Naive thymus-derived CD4-positive, alpha-beta T cell (primary cell): ENCODE measurements at regions of chr3 and their contacts with region 1.

Region 1: DNA sequence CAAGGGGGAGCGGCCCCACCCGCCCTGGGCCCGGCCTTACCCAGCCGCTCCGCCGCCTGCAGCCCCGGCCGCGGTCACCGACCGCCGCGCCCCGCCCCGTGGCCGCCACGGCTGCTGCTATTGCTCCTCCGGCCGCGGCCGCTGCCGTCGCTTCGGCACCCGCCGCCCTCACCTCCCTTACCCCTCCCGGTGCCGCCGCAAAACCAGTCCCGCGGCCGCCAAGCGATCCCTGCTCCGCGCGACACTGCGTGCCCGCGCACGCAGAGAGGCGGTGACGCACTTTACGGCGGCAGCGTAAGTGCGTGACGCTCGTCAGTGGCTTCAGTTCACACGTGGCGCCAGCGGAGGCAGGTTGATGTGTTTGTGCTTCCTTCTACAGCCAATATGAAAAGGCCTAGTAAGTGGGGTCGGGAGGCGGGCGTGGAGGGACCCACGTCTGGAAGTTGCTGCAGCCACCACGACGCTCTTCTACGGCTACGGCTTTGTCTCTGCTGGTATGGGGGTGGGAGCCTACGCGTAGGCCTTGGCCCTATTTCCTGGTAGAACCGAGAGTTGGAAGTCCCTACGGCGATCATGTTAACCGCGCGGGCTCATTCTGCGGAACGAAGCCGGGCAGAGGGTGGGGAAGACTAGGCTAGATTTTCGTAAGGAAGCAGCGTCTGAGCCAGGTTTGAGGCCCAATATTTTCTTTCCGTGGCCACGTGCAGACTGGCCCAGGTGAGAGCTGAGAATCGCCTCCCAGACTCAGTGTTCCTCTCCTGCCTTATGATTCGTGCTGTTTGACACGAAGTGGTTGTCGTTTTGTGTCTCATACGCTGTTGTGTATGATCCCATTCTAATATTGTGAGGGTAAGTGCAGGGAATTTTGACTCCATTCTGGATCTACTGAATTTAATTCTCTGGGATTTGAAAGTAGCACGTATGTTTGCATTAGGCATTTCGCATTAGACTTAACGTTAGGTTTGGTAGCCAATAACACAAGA is at the starts of genes GNL3 and PBRM1:
- DNase-seq: peak; percentile 87 to 94 (median 92)
- ATAC-seq: peak; percentile 96
- H3K4me3 ChIP-seq: peak within 1 kb of the TSS; percentile 80
- H3K4me3 Mint-ChIP-seq: peak within 1 kb of the TSS; percentile 95 to 99 (median 98)
- H3K27ac ChIP-seq: peak within 1 kb of the TSS; percentile 89
- H3K27ac Mint-ChIP-seq: peak within 1 kb of the TSS; percentile 93 to 99 (median 98)
- H3K4me1 ChIP-seq: peaks cover 21 to 25% of the 10 kb centered on the region in 2 donors
- H3K4me1 Mint-ChIP-seq: peaks cover 23 to 72% (median 62%) of the 10 kb centered on the region in 7 donors
- H3K27me3 ChIP-seq: no peaks in the 10 kb centered on the region
- H3K27me3 Mint-ChIP-seq: no peaks in the 10 kb centered on the region
- total RNA-seq, gene GNL3: 87.9 to 116 (median 97.2) TPM
- total RNA-seq, gene PBRM1: 58.4 to 83.8 (median 74.2) TPM

Region 2: GRCh38 chr3:52455283-52456168 is 230.5 kb before region 1 on chr3 and contains the start of gene NISCH:
- CTCF ChIA-PET with region 1: no interaction called
- POLR2A ChIA-PET with region 1: no interaction called
- intact Hi-C with region 1: loop called (anchors 5 to 10 kb)
- DNase-seq: peak; percentile 92 to 99 (median 97)
- ATAC-seq: peak; percentile 98
- H3K4me3 ChIP-seq: peak within 1 kb of the TSS; percentile 98
- H3K4me3 Mint-ChIP-seq: peak within 1 kb of the TSS; percentile 87 to 96 (median 93)
- H3K27ac ChIP-seq: peak within 1 kb of the TSS; percentile 88
- H3K27ac Mint-ChIP-seq: peak within 1 kb of the TSS; percentile 96 to 100 (median 99)
- H3K4me1 ChIP-seq: peaks cover 15 to 23% of the 10 kb centered on the region in 2 donors
- H3K4me1 Mint-ChIP-seq: peaks cover 25 to 47% (median 41%) of the 10 kb centered on the region in 7 donors
- H3K27me3 ChIP-seq: no peaks in the 10 kb centered on the region
- H3K27me3 Mint-ChIP-seq: no peaks in the 10 kb centered on the region
- total RNA-seq, gene NISCH: 86.8 to 210 (median 162) TPM

Region 3: GRCh38 chr3:52670621-52671521 is 15.1 kb before region 1 on chr3:
- CTCF ChIA-PET with region 1: no interaction called
- POLR2A ChIA-PET with region 1: interaction called, 3 read pairs
- intact Hi-C with region 1: loop called in 1 of 2 experiments (anchors 2 kb)
- DNase-seq: peak in 1 of 9 donors; percentile 56
- ATAC-seq: peak; percentile 89
- H3K4me3 ChIP-seq: no peak overlapping the region
- H3K4me3 Mint-ChIP-seq: peak overlapping the region in 1 of 10 donors; percentile 62
- H3K27ac ChIP-seq: no peak overlapping the region
- H3K27ac Mint-ChIP-seq: peak overlapping the region in 6 of 9 donors; percentile 25 to 85 (median 45)
- H3K4me1 ChIP-seq: peaks cover 0 to 14% of the 10 kb centered on the region in 2 donors
- H3K4me1 Mint-ChIP-seq: peaks cover 14 to 31% (median 24%) of the 10 kb centered on the region in 7 donors
- H3K27me3 ChIP-seq: no peaks in the 10 kb centered on the region
- H3K27me3 Mint-ChIP-seq: no peaks in the 10 kb centered on the region

Region 4: DNA sequence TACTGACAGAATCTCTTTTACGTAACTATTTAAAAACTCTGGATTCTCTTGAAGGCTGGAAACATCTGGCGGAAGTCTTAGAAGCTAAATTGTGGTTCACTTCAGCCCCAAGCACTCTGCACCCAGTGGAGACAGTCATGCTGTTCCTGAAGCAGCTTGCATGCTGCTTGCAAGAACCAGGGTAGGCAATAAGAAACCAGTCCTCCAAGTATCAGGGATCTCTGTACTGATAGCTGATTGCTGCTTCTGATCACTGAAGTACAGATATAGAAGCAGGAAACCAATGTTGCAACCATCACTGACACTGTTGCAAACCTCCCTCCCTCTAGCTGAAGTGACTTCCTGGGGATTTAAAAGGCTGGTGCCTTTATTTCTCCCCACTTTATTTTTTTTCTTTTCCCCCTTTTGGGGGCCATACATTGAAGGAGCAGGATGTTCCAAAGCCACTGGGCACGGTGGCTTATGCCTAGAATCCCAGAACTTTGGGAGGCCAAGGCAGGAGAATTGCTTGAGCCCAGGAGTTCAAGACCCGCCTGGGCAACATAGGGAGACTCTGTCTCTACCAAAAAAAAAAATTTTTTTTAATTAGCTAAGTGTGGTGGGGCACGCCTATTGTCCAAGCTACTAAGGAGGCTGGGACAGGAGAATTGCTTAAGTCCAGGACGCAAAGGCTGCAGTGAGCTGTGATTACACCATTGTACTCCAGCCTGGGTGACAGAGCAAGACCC is 35.2 kb after region 1 on chr3:
- CTCF ChIA-PET with region 1: no interaction called
- POLR2A ChIA-PET with region 1: interaction called, 4 read pairs
- intact Hi-C with region 1: loop called in 1 of 2 experiments (anchors 5 kb)
- DNase-seq: peak in 7 of 9 donors; percentile 47 to 69 (median 55)
- ATAC-seq: peak; percentile 86
- H3K4me3 ChIP-seq: no peak overlapping the region
- H3K4me3 Mint-ChIP-seq: peak overlapping the region; percentile 51 to 81 (median 69)
- H3K27ac ChIP-seq: peak overlapping the region; percentile 69
- H3K27ac Mint-ChIP-seq: peak overlapping the region; percentile 77 to 95 (median 92)
- H3K4me1 ChIP-seq: peaks cover 0 to 28% of the 10 kb centered on the region in 2 donors
- H3K4me1 Mint-ChIP-seq: peaks cover 18 to 47% (median 33%) of the 10 kb centered on the region in 7 donors
- H3K27me3 ChIP-seq: no peaks in the 10 kb centered on the region
- H3K27me3 Mint-ChIP-seq: no peaks in the 10 kb centered on the region

Region 5: GRCh38 chr3:52897130-52898122 is 211.4 kb after region 1 on chr3 and contains the start of gene STIMATE:
- CTCF ChIA-PET with region 1: no interaction called
- POLR2A ChIA-PET with region 1: no interaction called
- intact Hi-C with region 1: loop called in 1 of 2 experiments (anchors 5 kb)
- DNase-seq: peak; percentile 77 to 89 (median 86)
- ATAC-seq: peak; percentile 97
- H3K4me3 ChIP-seq: peak within 1 kb of the TSS; percentile 85
- H3K4me3 Mint-ChIP-seq: peak within 1 kb of the TSS; percentile 90 to 99 (median 95)
- H3K27ac ChIP-seq: peak within 1 kb of the TSS; percentile 72
- H3K27ac Mint-ChIP-seq: peak within 1 kb of the TSS; percentile 44 to 97 (median 86)
- H3K4me1 ChIP-seq: peaks cover 16 to 23% of the 10 kb centered on the region in 2 donors
- H3K4me1 Mint-ChIP-seq: peaks cover 37 to 51% (median 45%) of the 10 kb centered on the region in 7 donors
- H3K27me3 ChIP-seq: no peaks in the 10 kb centered on the region
- H3K27me3 Mint-ChIP-seq: no peaks in the 10 kb centered on the region
- total RNA-seq, gene STIMATE: 21.1 to 44.9 (median 34.5) TPM

Region 6: GRCh38 chr3:53140847-53141845 is 455.1 kb after region 1 on chr3:
- CTCF ChIA-PET with region 1: no interaction called
- POLR2A ChIA-PET with region 1: no interaction called
- intact Hi-C with region 1: no loop called
- DNase-seq: no peak
- ATAC-seq: peak; percentile 85
- H3K4me3 ChIP-seq: no peak overlapping the region
- H3K4me3 Mint-ChIP-seq: no peak overlapping the region
- H3K27ac ChIP-seq: no peak overlapping the region
- H3K27ac Mint-ChIP-seq: no peak overlapping the region
- H3K4me1 ChIP-seq: no peaks in the 10 kb centered on the region
- H3K4me1 Mint-ChIP-seq: peaks cover 0 to 6% (median 0%) of the 10 kb centered on the region in 7 donors
- H3K27me3 ChIP-seq: no peaks in the 10 kb centered on the region
- H3K27me3 Mint-ChIP-seq: no peaks in the 10 kb centered on the region

Region 7: DNA sequence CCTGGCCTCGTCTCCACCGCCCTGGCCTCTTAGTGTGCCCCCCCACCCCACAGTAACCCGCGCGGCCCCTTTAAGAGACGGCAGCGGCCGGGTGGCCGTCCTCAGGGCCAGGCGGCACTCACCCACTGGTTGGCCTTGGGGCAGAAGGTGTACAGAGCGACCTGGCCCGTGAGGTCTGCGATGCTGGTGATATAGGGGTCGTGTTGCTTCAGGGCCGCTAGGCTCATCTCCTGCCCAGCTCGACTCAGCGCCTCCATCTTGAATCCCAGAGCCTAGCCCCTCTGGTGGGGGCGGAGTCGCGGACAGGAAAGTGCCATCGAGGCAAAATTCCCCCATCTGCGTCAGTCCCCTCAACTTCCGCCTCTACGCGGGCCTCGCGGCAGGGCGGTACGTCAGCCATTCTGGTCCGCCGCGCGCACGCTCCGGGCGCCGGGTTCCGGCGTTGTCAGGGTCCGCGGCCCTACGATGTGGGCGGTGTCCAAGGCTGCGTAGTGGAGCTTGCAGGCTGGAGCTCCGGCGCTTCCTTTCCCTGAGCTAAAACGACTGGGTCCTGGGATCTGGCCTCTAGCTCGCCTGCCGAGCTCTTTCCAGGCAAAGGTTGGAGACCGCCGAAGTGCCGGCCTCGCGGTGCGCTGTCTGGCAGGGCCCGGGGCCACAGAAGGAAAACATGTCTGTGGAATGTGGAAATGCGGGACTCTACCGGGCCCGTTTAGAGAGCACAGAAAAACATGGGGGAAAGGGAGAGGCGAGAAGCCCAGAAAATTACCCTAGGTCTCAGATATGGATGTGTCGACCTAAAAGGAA is 661.5 kb after region 1 on chr3 and contains the start of gene DCP1A:
- CTCF ChIA-PET with region 1: no interaction called
- POLR2A ChIA-PET with region 1: no interaction called
- intact Hi-C with region 1: loop called in 1 of 2 experiments (anchors 1 kb)
- DNase-seq: peak; percentile 93 to 98 (median 96)
- ATAC-seq: peak; percentile 96
- H3K4me3 ChIP-seq: peak within 1 kb of the TSS; percentile 93
- H3K4me3 Mint-ChIP-seq: peak within 1 kb of the TSS; percentile 96 to 99 (median 99)
- H3K27ac ChIP-seq: peak within 1 kb of the TSS; percentile 98
- H3K27ac Mint-ChIP-seq: peak within 1 kb of the TSS; percentile 98 to 100 (median 99)
- H3K4me1 ChIP-seq: peaks cover 6 to 21% of the 10 kb centered on the region in 2 donors
- H3K4me1 Mint-ChIP-seq: peaks cover 13 to 58% (median 42%) of the 10 kb centered on the region in 7 donors
- H3K27me3 ChIP-seq: no peaks in the 10 kb centered on the region
- H3K27me3 Mint-ChIP-seq: no peaks in the 10 kb centered on the region
- total RNA-seq, gene DCP1A: 34.0 to 51.3 (median 40.1) TPM